K562 (cell line): ENCODE measurements at regions of chr3 and their contacts with region 1.

Region 1: DNA sequence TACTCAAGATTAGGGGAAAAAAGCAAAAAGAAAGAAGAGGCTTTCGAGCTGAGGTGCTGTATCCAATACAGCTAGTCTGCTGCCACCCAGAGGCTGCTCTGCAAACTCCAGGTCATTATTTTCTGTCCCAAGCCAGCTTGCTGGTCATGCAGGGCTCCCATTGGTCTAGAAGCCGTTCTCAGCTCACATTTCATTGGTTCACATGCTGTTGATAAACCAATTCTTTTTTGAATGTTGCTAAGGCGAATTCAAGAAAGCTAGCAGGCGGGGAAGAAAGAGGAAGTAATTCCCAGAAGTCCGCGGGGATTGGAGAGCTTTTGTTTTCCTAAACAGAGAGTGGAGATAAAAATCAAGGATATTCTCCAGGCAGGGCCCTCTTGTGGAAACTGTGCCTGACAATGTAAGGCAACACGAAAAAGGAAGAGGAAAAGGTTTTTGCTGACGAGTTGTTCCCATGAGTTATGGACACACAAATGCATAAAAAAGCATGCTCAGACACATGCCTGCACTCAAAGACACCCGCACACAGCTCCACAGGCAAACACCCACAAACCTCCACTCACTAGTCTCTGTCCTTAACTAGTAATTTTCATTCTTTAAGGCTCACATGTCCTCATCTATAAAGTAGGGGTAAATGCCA is 33.4 kb downstream of the FSTL1 start:
- DNase-seq: peak; percentile 81 to 87 (median 85)
- ATAC-seq: peak; percentile 99
- H3K4me3 ChIP-seq: no peak overlapping the region
- H3K27ac ChIP-seq: no peak overlapping the region
- H3K4me1 ChIP-seq: no peaks in the 10 kb centered on the region
- H3K27me3 ChIP-seq: no peaks in the 10 kb centered on the region
- CTCF ChIP-seq: peak; percentile 56 to 81 (median 79)
- EP300 ChIP-seq: no peak
- POLR2A ChIP-seq: no peak
- RAD21 ChIP-seq: peak; percentile 69 to 78

Region 2: DNA sequence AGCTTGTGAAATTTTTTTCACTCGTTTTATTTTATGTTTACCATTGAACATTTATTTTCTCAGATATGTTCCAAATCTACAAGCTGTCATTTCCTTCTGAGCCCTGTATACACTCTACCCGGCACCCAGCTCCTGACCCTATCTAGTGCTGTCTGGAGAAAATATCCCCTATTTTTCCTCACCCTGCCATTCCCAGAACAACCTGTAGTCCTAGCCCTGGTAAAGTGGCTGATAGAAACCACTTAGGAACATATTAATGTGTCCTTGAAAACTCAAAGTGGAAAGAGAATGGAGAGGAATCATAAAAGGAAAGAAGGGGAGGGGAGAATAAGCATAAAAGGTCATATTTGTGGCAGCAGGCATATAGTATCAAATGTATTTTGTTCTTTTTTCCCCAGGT is 927.2 kb before region 1 on chr3:
- CTCF ChIA-PET with region 1: no interaction called
- POLR2A ChIA-PET with region 1: no interaction called
- in situ Hi-C with region 1: no loop called
- intact Hi-C with region 1: no loop called
- DNase-seq: no peak
- ATAC-seq: peak; percentile 42; the same call in 1 of the 3 replicates
- H3K4me3 ChIP-seq: no peak overlapping the region
- H3K27ac ChIP-seq: no peak overlapping the region
- H3K4me1 ChIP-seq: no peaks in the 10 kb centered on the region
- H3K27me3 ChIP-seq: no peaks in the 10 kb centered on the region
- CTCF ChIP-seq: no peak
- EP300 ChIP-seq: no peak
- POLR2A ChIP-seq: no peak
- RAD21 ChIP-seq: no peak

Region 3: DNA sequence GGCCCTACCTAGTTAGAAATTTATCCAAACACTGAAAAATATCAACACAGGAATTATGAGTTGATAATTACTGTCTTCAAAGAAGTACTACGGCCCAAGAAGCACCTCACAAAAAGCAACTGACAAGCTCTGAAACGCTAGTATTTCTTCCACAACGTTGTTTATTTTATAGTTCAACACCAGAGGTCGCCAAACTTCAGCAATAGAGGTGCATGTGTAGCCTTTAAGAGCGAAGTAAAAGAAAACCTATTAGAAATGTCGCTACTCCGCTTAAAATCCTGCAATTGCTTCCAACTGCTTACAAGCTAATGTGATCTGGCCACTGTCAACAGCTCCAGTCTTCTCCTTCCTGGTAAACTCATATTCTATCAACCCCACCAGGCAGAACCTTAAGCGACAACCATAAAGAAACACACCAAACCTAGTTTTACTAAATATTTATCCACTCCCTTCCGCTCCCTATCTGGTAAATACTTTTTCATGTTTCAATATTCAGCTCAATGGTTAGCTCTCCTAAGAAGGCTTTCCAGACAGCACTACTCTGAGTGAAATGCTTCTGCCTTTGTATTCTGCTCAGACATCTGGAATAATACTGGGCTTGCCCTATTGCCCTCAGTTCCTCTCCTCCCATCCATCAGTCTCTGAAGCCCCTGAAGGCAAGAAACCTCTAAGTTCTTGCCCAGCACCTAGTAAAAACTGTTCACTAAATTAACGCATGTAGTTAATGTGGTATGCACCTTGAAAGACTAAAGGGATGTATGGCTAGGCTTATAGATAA is 525.3 kb before region 1 on chr3:
- CTCF ChIA-PET with region 1: no interaction called
- POLR2A ChIA-PET with region 1: no interaction called
- in situ Hi-C with region 1: no loop called
- intact Hi-C with region 1: loop called (anchors 10 kb)
- DNase-seq: peak; percentile 6 to 62 (median 11)
- ATAC-seq: peak; percentile 76
- H3K4me3 ChIP-seq: no peak overlapping the region
- H3K27ac ChIP-seq: no peak overlapping the region
- H3K4me1 ChIP-seq: no peaks in the 10 kb centered on the region
- H3K27me3 ChIP-seq: no peaks in the 10 kb centered on the region
- CTCF ChIP-seq: peak; percentile 38 to 66 (median 57); a peak in 5 of 6 replicates
- EP300 ChIP-seq: no peak
- POLR2A ChIP-seq: no peak
- RAD21 ChIP-seq: peak; percentile 54 to 80

Region 4: GRCh38 chr3:120245386-120245785 is 172.0 kb before region 1 on chr3:
- CTCF ChIA-PET with region 1: interaction called, 13 read pairs
- POLR2A ChIA-PET with region 1: no interaction called
- in situ Hi-C with region 1: no loop called
- intact Hi-C with region 1: loop called (anchors 1 kb)
- DNase-seq: no peak
- ATAC-seq: no peak
- H3K4me3 ChIP-seq: no peak overlapping the region
- H3K27ac ChIP-seq: no peak overlapping the region
- H3K4me1 ChIP-seq: no peaks in the 10 kb centered on the region
- H3K27me3 ChIP-seq: no peaks in the 10 kb centered on the region
- CTCF ChIP-seq: no peak
- EP300 ChIP-seq: no peak
- POLR2A ChIP-seq: no peak
- RAD21 ChIP-seq: no peak

Region 5: GRCh38 chr3:120928991-120929390 is 511.6 kb after region 1 on chr3:
- CTCF ChIA-PET with region 1: no interaction called
- POLR2A ChIA-PET with region 1: no interaction called
- in situ Hi-C with region 1: no loop called
- intact Hi-C with region 1: no loop called
- DNase-seq: no peak
- ATAC-seq: no peak
- H3K4me3 ChIP-seq: no peak overlapping the region
- H3K27ac ChIP-seq: no peak overlapping the region
- H3K4me1 ChIP-seq: no peaks in the 10 kb centered on the region
- H3K27me3 ChIP-seq: no peaks in the 10 kb centered on the region
- CTCF ChIP-seq: no peak
- EP300 ChIP-seq: no peak
- POLR2A ChIP-seq: no peak
- RAD21 ChIP-seq: no peak